MCF 10A (cell line): ENCODE measurements at regions of chr6 and their contacts with region 1.

Region 1: DNA sequence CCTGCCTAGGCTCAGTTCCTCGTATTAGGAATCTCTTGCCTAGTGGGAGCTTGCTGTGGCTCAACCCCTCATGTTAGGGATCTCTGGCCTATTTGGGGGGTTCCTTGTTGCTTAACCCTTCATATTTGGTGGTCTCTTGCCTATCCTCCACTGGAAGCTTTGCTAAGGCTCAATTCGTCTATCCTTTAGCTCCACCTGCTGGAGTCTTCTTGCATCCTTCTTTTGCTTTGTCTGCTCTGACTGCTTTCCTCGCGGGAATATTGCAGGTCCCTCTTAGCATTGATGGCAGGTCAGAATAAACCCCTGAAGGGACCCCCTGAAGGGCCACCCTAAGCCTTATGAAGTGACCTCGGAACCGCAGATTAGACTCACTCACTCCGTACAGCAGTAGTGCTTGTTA is 203.0 kb upstream of the TBX18 start:
- DNase-seq: peak; percentile 67
- H3K4me3 Mint-ChIP-seq: no peak overlapping the region
- H3K27ac Mint-ChIP-seq: peak overlapping the region; percentile 75
- H3K4me1 Mint-ChIP-seq: peaks cover 19% of the 10 kb centered on the region
- H3K27me3 Mint-ChIP-seq: no peaks in the 10 kb centered on the region
- CTCF ChIP-seq: peak; percentile 64

Region 2: GRCh38 chr6:84243240-84243639 is 724.1 kb before region 1 on chr6:
- CTCF ChIA-PET with region 1: interaction called, 3 read pairs
- POLR2A ChIA-PET with region 1: no interaction called
- intact Hi-C with region 1: loop called (anchors 2 kb)
- DNase-seq: no peak
- H3K4me3 Mint-ChIP-seq: no peak overlapping the region
- H3K27ac Mint-ChIP-seq: no peak overlapping the region
- H3K4me1 Mint-ChIP-seq: no peaks in the 10 kb centered on the region
- H3K27me3 Mint-ChIP-seq: no peaks in the 10 kb centered on the region
- CTCF ChIP-seq: peak; percentile 27

Region 3: GRCh38 chr6:84346364-84346763 is 621.0 kb before region 1 on chr6:
- CTCF ChIA-PET with region 1: interaction called, 3 read pairs
- POLR2A ChIA-PET with region 1: no interaction called
- intact Hi-C with region 1: loop called (anchors 5 kb)
- DNase-seq: peak; percentile 13
- H3K4me3 Mint-ChIP-seq: no peak overlapping the region
- H3K27ac Mint-ChIP-seq: no peak overlapping the region
- H3K4me1 Mint-ChIP-seq: peaks cover 5% of the 10 kb centered on the region
- H3K27me3 Mint-ChIP-seq: no peaks in the 10 kb centered on the region
- CTCF ChIP-seq: peak; percentile 23

Region 4: GRCh38 chr6:84422380-84422968 is 544.9 kb before region 1 on chr6:
- CTCF ChIA-PET with region 1: interaction called, 15 read pairs
- POLR2A ChIA-PET with region 1: no interaction called
- intact Hi-C with region 1: loop called (anchors 1 kb)
- DNase-seq: peak; percentile 67
- H3K4me3 Mint-ChIP-seq: no peak overlapping the region
- H3K27ac Mint-ChIP-seq: no peak overlapping the region
- H3K4me1 Mint-ChIP-seq: no peaks in the 10 kb centered on the region
- H3K27me3 Mint-ChIP-seq: no peaks in the 10 kb centered on the region
- CTCF ChIP-seq: peak; percentile 78

Region 5: DNA sequence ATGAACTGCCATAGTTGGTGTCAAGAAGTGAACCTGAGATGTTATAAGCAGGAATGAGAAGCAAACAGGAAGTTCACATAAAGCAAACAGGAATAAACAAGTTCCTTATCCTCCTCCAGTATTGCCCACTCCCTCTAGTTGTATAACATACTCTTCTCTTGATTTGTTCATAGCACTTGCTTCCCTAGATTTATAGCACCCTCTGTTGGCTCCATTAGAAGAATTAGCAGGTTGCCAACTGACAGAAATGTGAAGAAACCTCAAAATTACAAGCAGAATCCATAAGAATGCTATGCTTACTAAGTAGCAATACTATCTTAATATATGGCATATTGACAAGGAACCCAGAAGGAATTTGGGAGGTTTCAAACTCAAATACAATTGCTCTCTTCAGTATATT is 398.4 kb before region 1 on chr6:
- CTCF ChIA-PET with region 1: no interaction called
- POLR2A ChIA-PET with region 1: no interaction called
- intact Hi-C with region 1: loop called (anchors 10 kb)
- DNase-seq: peak; percentile 35
- H3K4me3 Mint-ChIP-seq: no peak overlapping the region
- H3K27ac Mint-ChIP-seq: no peak overlapping the region
- H3K4me1 Mint-ChIP-seq: no peaks in the 10 kb centered on the region
- H3K27me3 Mint-ChIP-seq: no peaks in the 10 kb centered on the region
- CTCF ChIP-seq: no peak

Region 6: DNA sequence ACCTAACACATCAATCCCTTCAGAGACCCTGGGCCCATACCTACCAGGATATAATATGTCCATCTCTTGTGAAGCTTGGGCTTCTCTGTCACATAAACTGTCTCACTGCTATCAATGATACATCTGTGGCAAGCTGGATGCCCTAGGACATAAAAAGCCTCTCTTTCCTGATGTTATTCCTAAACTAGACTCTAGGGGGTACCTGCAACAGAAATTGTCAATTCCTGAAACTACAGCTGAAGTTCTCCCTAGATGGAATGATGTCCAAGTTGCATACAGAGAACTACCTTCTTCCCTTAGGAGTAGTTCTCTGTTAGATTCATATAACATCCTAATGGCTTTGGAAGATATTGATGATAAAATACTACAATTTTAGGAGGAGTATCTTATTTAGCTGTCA is 238.8 kb before region 1 on chr6:
- CTCF ChIA-PET with region 1: no interaction called
- POLR2A ChIA-PET with region 1: no interaction called
- intact Hi-C with region 1: loop called (anchors 1 kb)
- DNase-seq: peak; percentile 54
- H3K4me3 Mint-ChIP-seq: no peak overlapping the region
- H3K27ac Mint-ChIP-seq: no peak overlapping the region
- H3K4me1 Mint-ChIP-seq: peaks cover 9% of the 10 kb centered on the region
- H3K27me3 Mint-ChIP-seq: no peaks in the 10 kb centered on the region
- CTCF ChIP-seq: peak; percentile 41